ENCODE measurements at regions of chr5 and their contacts with region 1.

Region 1: GRCh38 chr5:65925601-65926275 is 637 bp upstream of the ERBIN start:
- DNase-seq: peak; percentile 80
- H3K4me3 ChIP-seq: peak overlapping the region; percentile 86 to 97
- H3K27ac ChIP-seq: peak overlapping the region; percentile 100
- H3K4me1 ChIP-seq: peaks cover 3% of the 10 kb centered on the region
- H3K27me3 ChIP-seq: no peaks in the 10 kb centered on the region
- CTCF ChIP-seq: peak; percentile 34 to 63 (median 44)
- POLR2A ChIP-seq: peak; percentile 87

Region 2: DNA sequence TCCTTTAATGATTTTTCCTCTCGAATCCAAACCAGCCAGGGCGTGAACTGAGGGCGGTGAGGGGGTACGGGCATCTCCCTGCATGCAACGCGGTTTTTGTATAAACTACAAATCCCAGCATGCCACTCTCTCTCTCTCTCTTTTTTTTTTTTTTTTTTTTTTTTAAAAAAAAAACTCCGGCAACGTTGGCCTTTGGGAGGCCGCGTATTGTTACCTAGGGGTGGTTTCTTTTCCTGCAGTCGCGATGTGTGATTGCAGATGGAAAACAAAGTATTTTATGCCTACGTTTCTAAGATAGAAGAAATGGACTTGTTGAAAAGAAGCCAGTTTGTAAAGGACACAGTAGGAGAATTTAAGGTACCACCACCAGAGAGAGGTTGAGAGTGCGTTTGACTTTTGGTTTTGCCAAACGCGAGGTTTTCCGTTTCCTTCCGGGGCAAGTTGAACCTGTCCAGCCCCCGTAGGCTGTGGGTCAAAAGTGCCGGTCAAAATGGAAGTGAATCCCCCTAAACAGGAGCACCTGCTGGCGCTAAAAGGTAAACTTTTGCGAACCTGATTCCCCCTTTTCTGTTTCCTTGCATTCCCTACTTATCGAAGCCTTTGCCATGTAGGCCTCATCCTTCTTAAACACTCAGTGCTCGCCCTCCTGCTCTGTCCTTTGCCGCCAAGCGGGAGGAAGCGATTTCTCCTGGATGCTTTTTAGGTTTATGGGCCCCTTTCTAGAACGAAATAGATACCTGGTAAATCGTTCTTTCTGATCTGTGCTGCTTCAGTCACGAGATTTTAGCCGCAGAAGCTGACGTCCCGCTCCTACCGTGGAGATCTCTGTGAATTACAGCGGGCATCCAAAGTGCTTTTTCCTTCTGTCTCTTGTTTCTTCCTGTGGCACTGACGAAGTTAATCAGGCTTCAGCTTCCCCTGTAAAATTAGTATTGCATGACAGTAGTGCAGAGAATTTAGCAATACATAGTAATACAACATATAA is 300.9 kb before region 1 on chr5 and contains the starts of genes SHLD3 and TRAPPC13:
- intact Hi-C with region 1: loop called (anchors 10 kb)
- DNase-seq: peak; percentile 81
- H3K4me3 ChIP-seq: peak within 1 kb of the TSS; percentile 76 to 81
- H3K27ac ChIP-seq: peak within 1 kb of the TSS; percentile 84 to 85
- H3K4me1 ChIP-seq: no peaks in the 10 kb centered on the region
- H3K27me3 ChIP-seq: no peaks in the 10 kb centered on the region
- CTCF ChIP-seq: peak in 2 of 4 experiments; percentile 12 to 18
- POLR2A ChIP-seq: no peak
- total RNA-seq, gene SHLD3: 2.1 to 5.6 TPM
- total RNA-seq, gene TRAPPC13: 19.3 to 27.7 TPM

Region 3: DNA sequence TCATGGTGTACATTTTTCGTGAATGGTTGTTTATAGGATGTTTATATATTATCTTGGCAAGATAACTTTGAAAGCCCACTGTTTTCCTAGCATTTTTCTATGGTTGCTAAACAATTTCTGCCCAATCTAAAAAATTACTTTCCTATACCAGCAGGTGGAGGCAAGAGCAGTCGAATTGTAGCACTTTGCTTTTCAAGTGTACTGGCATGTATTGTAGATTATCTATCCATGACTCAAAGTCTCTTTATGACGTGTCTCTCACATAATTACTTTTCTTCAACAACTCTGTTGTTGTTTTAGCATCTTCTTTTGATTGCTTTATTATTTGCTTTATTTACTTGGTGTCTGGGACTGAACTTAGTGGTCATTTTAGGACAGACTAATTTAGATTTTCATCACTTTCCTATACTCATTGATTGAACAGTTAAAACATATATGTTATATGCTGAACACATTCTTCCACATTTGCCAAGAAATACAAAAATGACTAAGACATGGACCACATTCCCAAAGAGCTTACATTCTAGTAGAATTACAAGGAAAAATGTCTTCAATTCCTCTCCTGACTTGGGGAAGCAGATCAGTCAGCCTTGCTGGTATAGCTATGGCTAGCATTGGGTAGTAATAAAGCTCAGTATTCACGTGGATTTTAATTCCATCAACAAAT is 183.0 kb before region 1 on chr5:
- intact Hi-C with region 1: loop called (anchors 10 kb)
- DNase-seq: no peak
- H3K4me3 ChIP-seq: no peak overlapping the region
- H3K27ac ChIP-seq: no peak overlapping the region
- H3K4me1 ChIP-seq: no peaks in the 10 kb centered on the region
- H3K27me3 ChIP-seq: no peaks in the 10 kb centered on the region
- CTCF ChIP-seq: peak in 3 of 4 experiments; percentile 29 to 69 (median 40)
- POLR2A ChIP-seq: no peak

Region 4: GRCh38 chr5:65809817-65810531 is 115.8 kb before region 1 on chr5:
- intact Hi-C with region 1: no loop called
- DNase-seq: peak; percentile 10
- H3K4me3 ChIP-seq: no peak overlapping the region
- H3K27ac ChIP-seq: no peak overlapping the region
- H3K4me1 ChIP-seq: no peaks in the 10 kb centered on the region
- H3K27me3 ChIP-seq: no peaks in the 10 kb centered on the region
- CTCF ChIP-seq: no peak
- POLR2A ChIP-seq: no peak

Region 5: DNA sequence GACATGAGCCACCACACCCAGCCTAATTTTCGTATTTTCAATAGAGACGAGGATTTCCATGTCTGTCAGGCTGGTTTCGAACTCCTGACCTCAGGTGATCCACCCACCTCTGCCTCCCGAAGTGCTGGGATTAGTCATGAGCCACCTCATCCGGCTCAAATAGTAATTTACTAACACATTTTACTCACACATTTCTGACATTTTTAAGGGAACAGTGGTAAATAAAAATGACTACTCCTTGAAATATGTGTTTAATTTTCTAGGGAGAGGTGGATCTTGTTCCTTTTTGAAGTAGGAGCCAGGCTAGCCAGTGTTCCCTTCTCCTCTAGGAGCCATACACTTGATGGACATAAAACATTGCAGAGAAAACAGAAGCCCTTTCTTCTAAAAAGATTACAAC is 54.6 kb before region 1 on chr5:
- intact Hi-C with region 1: no loop called
- DNase-seq: no peak
- H3K4me3 ChIP-seq: no peak overlapping the region
- H3K27ac ChIP-seq: no peak overlapping the region
- H3K4me1 ChIP-seq: no peaks in the 10 kb centered on the region
- H3K27me3 ChIP-seq: no peaks in the 10 kb centered on the region
- CTCF ChIP-seq: no peak
- POLR2A ChIP-seq: no peak

Region 6: GRCh38 chr5:66010476-66010875 is 84.7 kb after region 1 on chr5:
- intact Hi-C with region 1: no loop called
- DNase-seq: no peak
- H3K4me3 ChIP-seq: no peak overlapping the region
- H3K27ac ChIP-seq: no peak overlapping the region
- H3K4me1 ChIP-seq: no peaks in the 10 kb centered on the region
- H3K27me3 ChIP-seq: no peaks in the 10 kb centered on the region
- CTCF ChIP-seq: no peak
- POLR2A ChIP-seq: no peak

Region 7: DNA sequence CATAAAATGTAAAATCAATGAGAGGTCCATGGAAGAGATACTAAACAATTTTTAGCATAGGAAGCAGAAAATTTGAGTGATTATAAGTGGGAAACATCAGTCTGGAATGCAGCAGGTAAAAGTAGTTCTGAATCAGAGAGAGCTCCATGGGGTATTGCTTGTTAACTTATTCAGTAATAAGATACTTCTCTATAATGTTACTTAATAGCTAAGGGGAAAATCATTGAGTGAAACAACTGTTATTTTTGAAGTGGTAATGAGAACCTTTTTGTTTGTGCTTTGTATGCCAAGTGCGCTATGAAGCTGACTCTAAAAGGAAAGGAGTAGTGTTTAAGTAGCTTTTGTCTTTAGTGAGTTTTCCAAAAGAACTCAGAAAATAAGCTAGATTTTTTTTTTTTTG is 95.8 kb after region 1 on chr5:
- intact Hi-C with region 1: loop called (anchors 10 kb)
- DNase-seq: no peak
- H3K4me3 ChIP-seq: no peak overlapping the region
- H3K27ac ChIP-seq: no peak overlapping the region
- H3K4me1 ChIP-seq: no peaks in the 10 kb centered on the region
- H3K27me3 ChIP-seq: no peaks in the 10 kb centered on the region
- CTCF ChIP-seq: no peak
- POLR2A ChIP-seq: no peak

Region 8: GRCh38 chr5:66144074-66144833 is 218.5 kb after region 1 on chr5 and contains the start of gene SREK1:
- intact Hi-C with region 1: loop called (anchors 5 kb)
- DNase-seq: peak; percentile 90
- H3K4me3 ChIP-seq: peak within 1 kb of the TSS; percentile 82 to 92
- H3K27ac ChIP-seq: peak within 1 kb of the TSS; percentile 99
- H3K4me1 ChIP-seq: no peaks in the 10 kb centered on the region
- H3K27me3 ChIP-seq: no peaks in the 10 kb centered on the region
- CTCF ChIP-seq: peak in 1 of 4 experiments; percentile 13
- POLR2A ChIP-seq: peak; percentile 79
- total RNA-seq, gene SREK1: 65.2 to 67.5 TPM